HEK293 (cell line): ENCODE measurements at regions of chr15 and their contacts with region 1.

Region 1: GRCh38 chr15:71800835-71801745 is 9.3 kb upstream of the NR2E3 start:
- H3K4me3 ChIP-seq: no peak overlapping the region
- H3K27ac ChIP-seq: no peak overlapping the region
- H3K4me1 ChIP-seq: peaks cover 6% of the 10 kb centered on the region
- CTCF ChIP-seq: peak; percentile 84

Region 2: GRCh38 chr15:71386448-71387236 is 414.4 kb before region 1 on chr15:
- CTCF ChIA-PET with region 1: interaction called, 10 read pairs
- POLR2A ChIA-PET with region 1: no interaction called
- H3K4me3 ChIP-seq: no peak overlapping the region
- H3K27ac ChIP-seq: peak overlapping the region; percentile 25; the same call in 1 of the 2 replicates
- H3K4me1 ChIP-seq: peaks cover 51% of the 10 kb centered on the region
- CTCF ChIP-seq: peak; percentile 61

Region 3: DNA sequence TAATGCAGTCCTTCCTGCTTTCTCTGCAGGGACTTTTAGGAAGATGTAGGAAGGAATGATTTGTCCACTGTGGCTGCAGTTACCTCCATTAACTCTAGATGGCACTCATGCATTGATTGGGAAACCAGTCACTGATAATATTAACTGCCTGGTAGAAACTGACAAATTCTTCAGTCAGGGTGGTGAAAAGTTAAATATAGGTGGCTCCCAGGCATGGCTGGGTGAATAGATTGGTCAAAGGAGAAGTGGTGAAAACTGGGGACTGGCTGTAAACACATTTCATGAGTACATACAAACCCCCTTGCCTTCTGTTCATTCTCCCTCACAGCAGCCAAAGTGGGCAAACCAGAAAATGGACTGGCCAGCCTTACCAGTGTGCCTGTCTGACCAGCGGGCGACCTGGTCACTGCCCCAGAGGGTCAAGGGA is 352.4 kb before region 1 on chr15:
- CTCF ChIA-PET with region 1: interaction called, 16 read pairs
- POLR2A ChIA-PET with region 1: no interaction called
- H3K4me3 ChIP-seq: no peak overlapping the region
- H3K27ac ChIP-seq: no peak overlapping the region
- H3K4me1 ChIP-seq: peaks cover 13% of the 10 kb centered on the region
- CTCF ChIP-seq: peak; percentile 78

Region 4: GRCh38 chr15:71575474-71576045 is 225.5 kb before region 1 on chr15:
- CTCF ChIA-PET with region 1: interaction called, 36 read pairs
- POLR2A ChIA-PET with region 1: no interaction called
- H3K4me3 ChIP-seq: no peak overlapping the region
- H3K27ac ChIP-seq: no peak overlapping the region
- H3K4me1 ChIP-seq: no peaks in the 10 kb centered on the region
- CTCF ChIP-seq: peak; percentile 50; the same call in 1 of the 2 replicates

Region 5: DNA sequence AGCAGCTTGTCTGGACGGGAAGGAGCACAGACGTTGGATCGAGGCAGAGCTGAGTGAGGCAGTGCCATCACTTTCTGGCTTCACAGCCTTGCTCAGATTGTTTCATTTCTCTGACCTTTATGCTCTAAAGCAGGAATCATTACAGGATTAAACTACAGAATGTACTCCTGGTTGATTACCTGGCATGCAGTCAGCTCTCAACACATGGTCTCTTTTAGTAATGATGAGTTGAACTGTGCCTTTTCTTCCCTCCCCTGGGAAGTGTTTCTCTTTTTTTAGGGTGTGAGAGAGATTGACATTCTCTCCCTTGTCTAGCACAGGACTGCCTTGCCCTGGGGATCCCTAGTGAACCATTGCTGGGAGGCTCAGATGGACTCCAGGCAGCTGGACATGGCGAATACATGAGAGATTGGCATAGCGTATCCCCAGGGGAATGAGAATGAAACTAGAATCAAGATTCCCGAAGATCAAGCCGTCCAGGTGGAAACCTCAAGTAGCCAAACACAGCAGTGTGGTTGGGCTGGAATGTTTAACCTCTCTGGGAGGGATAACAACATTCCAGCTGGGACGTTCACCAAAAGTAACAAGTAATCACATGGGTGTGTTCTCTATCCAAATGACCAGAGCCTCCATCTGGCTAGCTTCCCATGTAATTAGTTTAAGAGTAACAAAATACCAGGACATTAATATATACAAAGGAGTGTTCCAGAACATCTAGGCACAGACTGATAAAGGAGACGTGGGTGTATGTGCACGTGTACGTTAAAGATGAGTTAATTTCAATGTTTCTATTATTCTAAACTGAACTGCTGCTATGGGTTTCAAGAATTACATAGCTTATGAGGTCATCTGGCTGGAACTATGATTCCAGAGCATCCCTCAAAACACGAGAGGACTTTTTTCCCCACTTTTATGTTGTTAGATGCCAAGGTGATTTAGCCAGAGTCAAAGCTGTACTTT is 109.4 kb before region 1 on chr15:
- CTCF ChIA-PET with region 1: no interaction called
- POLR2A ChIA-PET with region 1: no interaction called
- H3K4me3 ChIP-seq: no peak overlapping the region; the same call in 1 of the 2 replicates
- H3K27ac ChIP-seq: peak overlapping the region; percentile 54; the same call in 1 of the 2 replicates
- H3K4me1 ChIP-seq: peaks cover 14% of the 10 kb centered on the region
- CTCF ChIP-seq: no peak

Region 6: GRCh38 chr15:71752604-71753289 is 48.3 kb before region 1 on chr15:
- CTCF ChIA-PET with region 1: interaction called, 140 read pairs
- POLR2A ChIA-PET with region 1: no interaction called
- H3K4me3 ChIP-seq: no peak overlapping the region
- H3K27ac ChIP-seq: no peak overlapping the region
- H3K4me1 ChIP-seq: peaks cover 14% of the 10 kb centered on the region
- CTCF ChIP-seq: peak; percentile 47; the same call in 1 of the 2 replicates

Region 7: GRCh38 chr15:71841563-71841962 is 40.5 kb after region 1 on chr15:
- CTCF ChIA-PET with region 1: interaction called, 14 read pairs
- POLR2A ChIA-PET with region 1: no interaction called
- H3K4me3 ChIP-seq: no peak overlapping the region
- H3K27ac ChIP-seq: no peak overlapping the region
- H3K4me1 ChIP-seq: no peaks in the 10 kb centered on the region
- CTCF ChIP-seq: no peak